Cardiac septum (tissue), 1 donor: ENCODE measurements at regions of chr1 and their contacts with region 1.

Region 1: DNA sequence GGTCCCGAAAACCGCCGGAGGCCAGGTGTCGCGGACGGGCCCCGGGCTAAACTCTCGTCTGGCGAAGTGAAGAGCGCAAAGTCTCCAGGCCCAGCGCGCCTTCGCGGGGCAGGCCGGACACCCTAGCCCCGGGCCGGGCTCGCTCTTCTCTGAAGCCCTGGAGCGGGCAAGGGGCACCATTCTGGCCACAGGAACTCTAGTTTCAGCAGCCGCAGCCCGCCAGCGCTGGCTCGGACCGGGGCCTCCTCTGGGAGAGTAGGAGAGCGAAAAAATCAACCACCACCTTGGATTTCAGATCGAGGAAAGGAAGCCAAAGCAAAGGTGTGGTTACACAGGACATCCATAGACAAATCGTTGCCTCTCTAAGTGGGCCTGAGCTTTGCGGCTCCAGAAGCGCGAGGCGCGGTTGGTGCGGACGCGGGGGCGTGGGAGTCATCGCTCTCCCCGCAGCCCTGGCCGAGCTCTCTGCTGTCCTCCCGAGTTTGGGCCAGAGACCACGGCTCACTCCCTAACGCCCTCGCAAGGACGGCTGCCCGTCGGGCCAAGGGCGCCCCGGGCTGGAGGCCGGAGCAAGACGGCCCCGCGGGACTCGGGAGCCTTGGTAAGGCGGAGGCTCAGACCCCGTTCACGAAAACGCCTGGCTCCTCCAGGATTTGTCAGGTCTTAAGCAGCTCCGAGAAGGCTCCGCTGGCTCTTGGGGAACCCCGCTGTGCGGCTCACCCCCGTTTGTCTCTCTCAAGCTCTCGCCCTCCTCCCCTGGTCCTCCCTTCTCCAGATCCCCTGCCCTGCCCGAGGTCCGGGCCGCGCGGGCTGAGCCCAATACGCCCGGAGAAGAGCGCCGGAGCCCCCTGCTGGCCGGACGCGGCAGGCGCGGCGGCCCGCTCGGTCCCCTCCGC is 132.9 kb upstream of the DPYD start:
- DNase-seq: peak; percentile 78

Region 2: DNA sequence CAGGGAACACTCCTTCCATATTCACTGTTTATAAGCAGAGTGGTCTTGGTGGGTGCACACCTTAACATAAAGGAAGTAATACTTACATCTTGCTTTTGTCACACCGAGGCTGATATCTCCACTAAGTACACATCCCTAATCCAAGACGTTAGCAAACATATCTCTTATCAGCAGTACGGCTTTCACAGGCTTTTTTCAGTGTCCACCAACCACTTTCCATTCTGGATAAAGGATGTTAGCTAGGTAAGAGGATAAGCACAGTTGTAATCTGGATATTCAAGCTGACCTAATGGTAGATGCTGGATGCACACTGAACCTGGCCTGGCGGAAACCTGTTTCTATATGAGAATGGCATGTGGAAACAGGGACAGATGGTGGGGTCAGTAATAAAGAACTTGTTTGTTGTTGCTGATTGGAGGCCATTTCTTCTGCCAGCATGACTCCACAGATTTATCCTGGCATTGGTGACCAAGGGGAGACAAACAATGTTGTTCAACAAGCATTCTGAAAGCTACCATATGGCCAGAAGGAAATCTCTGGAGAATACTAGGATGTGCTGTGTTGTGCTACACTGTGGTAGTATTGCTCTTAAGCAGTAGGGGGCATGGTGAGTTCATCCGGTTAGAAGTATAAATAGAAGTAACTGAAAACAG is 915.7 kb before region 1 on chr1:
- intact Hi-C with region 1: loop called (anchors 5 kb)
- DNase-seq: no peak

Region 3: DNA sequence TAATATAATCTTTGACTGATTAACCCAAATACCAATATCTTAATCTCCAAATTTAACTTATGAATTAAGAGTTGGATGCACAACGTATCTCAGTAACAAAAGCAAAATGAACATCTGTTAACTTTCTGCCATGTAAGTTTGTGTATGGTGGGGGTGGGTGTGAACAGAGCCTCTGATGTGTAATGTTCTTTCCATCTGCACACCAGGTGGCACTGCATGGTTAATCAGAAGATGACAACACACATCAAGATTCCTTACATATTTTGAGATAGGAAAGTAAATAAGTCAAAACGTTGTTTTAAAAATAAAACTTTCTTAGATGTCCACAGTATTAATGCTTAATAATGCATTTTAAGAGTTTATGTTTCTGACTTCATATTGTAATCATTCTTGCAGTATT is 384.8 kb before region 1 on chr1:
- intact Hi-C with region 1: loop called (anchors 10 kb)
- DNase-seq: no peak

Region 4: GRCh38 chr1:97929874-97930851 is 123.6 kb before region 1 on chr1:
- intact Hi-C with region 1: no loop called
- DNase-seq: no peak

Region 5: GRCh38 chr1:98638185-98638584 is 584.5 kb after region 1 on chr1:
- intact Hi-C with region 1: no loop called
- DNase-seq: no peak